CD8-positive, alpha-beta T cell (primary cell): ENCODE measurements at regions of chr12 and their contacts with region 1.

Region 1: GRCh38 chr12:11581179-11581755 is 68.2 kb upstream of the ETV6 start:
- DNase-seq: peak; percentile 16 to 81 (median 69)
- ATAC-seq: peak; percentile 26
- H3K4me3 ChIP-seq: no peak overlapping the region
- H3K4me3 Mint-ChIP-seq: no peak overlapping the region
- H3K27ac ChIP-seq: no peak overlapping the region
- H3K27ac Mint-ChIP-seq: no peak overlapping the region
- H3K4me1 ChIP-seq: peaks cover 3% of the 10 kb centered on the region
- H3K4me1 Mint-ChIP-seq: peaks cover 2% of the 10 kb centered on the region
- H3K27me3 ChIP-seq: peaks cover 0 to 5% of the 10 kb centered on the region in 2 experiments
- H3K27me3 Mint-ChIP-seq: peaks cover 2% of the 10 kb centered on the region
- CTCF ChIP-seq: peak; percentile 86

Region 2: DNA sequence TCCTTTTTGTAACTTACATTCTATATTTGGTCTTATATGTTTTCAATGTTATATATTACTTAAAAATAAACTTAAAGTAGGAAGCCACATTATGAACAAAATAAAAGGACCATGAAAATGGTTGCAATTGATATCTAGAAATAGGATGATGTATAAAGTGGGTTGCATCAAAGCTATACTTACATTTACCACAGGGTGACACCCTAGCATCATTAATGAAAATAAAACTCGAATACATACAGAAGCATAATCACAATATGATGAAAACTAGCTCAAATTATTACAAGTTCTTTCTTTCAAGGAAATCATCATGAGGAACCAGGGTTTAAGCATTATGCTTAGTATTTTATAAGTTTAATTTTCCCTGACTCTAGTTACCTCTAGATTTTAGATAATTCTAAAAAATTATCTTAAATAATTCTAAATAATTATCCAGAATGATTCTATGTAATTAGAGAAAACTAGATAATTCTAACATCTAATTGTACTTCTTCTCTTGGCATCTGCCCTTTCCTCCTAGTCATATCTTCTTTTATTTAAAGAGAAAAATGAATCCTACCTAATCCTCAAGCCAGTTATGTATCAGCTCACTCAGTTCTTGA is 810.0 kb before region 1 on chr12:
- CTCF ChIA-PET with region 1: no interaction called
- POLR2A ChIA-PET with region 1: no interaction called
- intact Hi-C with region 1: loop called in 1 of 2 experiments (anchors 5 kb)
- DNase-seq: peak in 2 of 9 experiments; percentile 59 to 72
- ATAC-seq: peak; percentile 81
- H3K4me3 ChIP-seq: no peak overlapping the region
- H3K4me3 Mint-ChIP-seq: no peak overlapping the region
- H3K27ac ChIP-seq: no peak overlapping the region
- H3K27ac Mint-ChIP-seq: no peak overlapping the region
- H3K4me1 ChIP-seq: no peaks in the 10 kb centered on the region
- H3K4me1 Mint-ChIP-seq: no peaks in the 10 kb centered on the region
- H3K27me3 ChIP-seq: peaks cover 2 to 5% of the 10 kb centered on the region in 2 experiments
- H3K27me3 Mint-ChIP-seq: peaks cover 39% of the 10 kb centered on the region
- CTCF ChIP-seq: peak; percentile 81

Region 3: GRCh38 chr12:10873378-10873777 is 707.9 kb before region 1 on chr12:
- CTCF ChIA-PET with region 1: no interaction called
- POLR2A ChIA-PET with region 1: no interaction called
- intact Hi-C with region 1: no loop called
- DNase-seq: no peak
- ATAC-seq: no peak
- H3K4me3 ChIP-seq: no peak overlapping the region
- H3K4me3 Mint-ChIP-seq: no peak overlapping the region
- H3K27ac ChIP-seq: no peak overlapping the region
- H3K27ac Mint-ChIP-seq: no peak overlapping the region
- H3K4me1 ChIP-seq: no peaks in the 10 kb centered on the region
- H3K4me1 Mint-ChIP-seq: no peaks in the 10 kb centered on the region
- H3K27me3 ChIP-seq: no peaks in the 10 kb centered on the region
- H3K27me3 Mint-ChIP-seq: no peaks in the 10 kb centered on the region
- CTCF ChIP-seq: no peak

Region 4: DNA sequence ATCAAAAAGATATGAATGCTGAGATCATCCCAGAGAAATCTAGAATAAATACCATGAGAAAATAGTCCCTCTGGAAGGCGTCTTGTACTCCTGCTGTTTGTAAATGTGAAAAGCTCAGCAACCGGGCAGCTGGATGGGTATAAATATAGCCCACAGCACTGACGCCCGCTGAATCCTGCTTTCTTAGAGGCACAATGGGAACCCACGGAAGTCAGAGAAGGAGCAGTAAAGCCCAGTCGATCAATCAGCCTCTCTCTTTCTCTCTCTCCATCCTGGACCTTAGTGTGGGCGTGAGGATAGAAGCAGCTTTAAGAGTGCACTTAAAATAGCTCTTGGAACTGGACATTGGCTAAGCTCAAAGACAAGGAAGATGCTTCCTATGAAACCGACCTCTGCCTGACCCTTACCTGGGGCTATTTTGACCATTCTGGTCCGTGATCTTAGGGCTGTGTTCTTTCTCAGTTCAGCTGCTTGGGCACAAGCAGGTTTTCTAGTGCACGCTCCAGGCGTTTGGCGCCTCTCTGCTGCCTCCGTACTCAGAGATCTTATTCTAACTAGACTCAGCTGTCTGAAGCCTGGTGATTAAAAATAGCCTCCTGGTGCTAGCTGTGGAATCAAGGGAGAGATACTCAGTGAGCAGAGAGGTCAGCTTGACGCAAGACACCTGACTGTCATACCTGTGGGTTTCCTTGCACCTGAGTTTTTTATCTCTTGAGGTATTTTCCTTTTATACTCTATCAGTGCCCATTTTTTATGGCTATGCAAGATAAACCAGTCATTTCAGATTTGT is 212.8 kb after region 1 on chr12:
- CTCF ChIA-PET with region 1: no interaction called
- POLR2A ChIA-PET with region 1: no interaction called
- intact Hi-C with region 1: no loop called
- DNase-seq: no peak
- ATAC-seq: no peak
- H3K4me3 ChIP-seq: no peak overlapping the region
- H3K4me3 Mint-ChIP-seq: no peak overlapping the region
- H3K27ac ChIP-seq: no peak overlapping the region
- H3K27ac Mint-ChIP-seq: no peak overlapping the region
- H3K4me1 ChIP-seq: peaks cover 7% of the 10 kb centered on the region
- H3K4me1 Mint-ChIP-seq: peaks cover 20% of the 10 kb centered on the region
- H3K27me3 ChIP-seq: no peaks in the 10 kb centered on the region
- H3K27me3 Mint-ChIP-seq: no peaks in the 10 kb centered on the region
- CTCF ChIP-seq: no peak

Region 5: DNA sequence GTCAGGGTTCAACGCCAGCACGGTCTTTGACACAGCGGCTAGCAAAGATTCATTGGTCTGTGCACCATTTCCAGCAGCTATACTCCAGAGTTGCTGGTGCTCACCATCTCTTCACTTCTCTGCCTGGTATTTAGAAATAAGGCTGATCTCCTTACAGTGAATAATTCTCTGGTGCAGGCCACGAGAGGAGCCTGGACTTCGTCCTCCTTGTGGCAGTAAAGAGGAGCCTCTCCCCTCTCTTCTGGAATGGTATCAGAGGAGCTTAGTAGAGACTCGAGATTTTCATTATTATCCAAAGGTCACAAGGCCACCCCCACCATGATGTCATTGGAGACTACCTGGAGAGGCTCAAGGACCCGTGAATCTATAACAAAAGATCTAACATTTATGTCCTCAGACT is 458.6 kb after region 1 on chr12:
- CTCF ChIA-PET with region 1: interaction called, 241 read pairs
- POLR2A ChIA-PET with region 1: interaction called, 3 read pairs
- intact Hi-C with region 1: no loop called
- DNase-seq: no peak
- ATAC-seq: no peak
- H3K4me3 ChIP-seq: no peak overlapping the region
- H3K4me3 Mint-ChIP-seq: no peak overlapping the region
- H3K27ac ChIP-seq: no peak overlapping the region
- H3K27ac Mint-ChIP-seq: no peak overlapping the region
- H3K4me1 ChIP-seq: no peaks in the 10 kb centered on the region
- H3K4me1 Mint-ChIP-seq: no peaks in the 10 kb centered on the region
- H3K27me3 ChIP-seq: no peaks in the 10 kb centered on the region
- H3K27me3 Mint-ChIP-seq: peaks cover 7% of the 10 kb centered on the region
- CTCF ChIP-seq: no peak

Region 6: DNA sequence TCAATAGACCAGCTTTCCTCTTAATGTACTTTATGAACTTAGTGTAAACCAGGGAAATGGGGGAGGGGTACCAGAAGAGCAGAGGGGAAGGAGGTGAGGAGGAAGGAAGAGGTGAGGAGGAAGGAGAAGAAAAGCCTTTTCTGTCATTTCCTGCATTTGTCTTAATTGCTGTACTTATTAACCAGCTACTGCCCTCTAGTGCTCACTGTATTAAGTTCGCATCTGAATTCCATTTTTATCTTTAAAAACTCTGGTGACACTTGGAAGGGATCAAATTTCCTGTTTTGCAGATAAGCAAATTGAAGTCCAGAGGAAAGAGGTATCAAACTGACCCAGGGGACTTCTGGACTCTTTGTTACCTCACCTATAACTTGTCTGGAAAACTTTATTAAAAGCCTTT is 746.5 kb after region 1 on chr12:
- CTCF ChIA-PET with region 1: interaction called, 14 read pairs
- POLR2A ChIA-PET with region 1: no interaction called
- intact Hi-C with region 1: loop called in 1 of 2 experiments (anchors 1 kb)
- DNase-seq: peak in 5 of 9 experiments; percentile 4 to 78 (median 25)
- ATAC-seq: peak; percentile 63
- H3K4me3 ChIP-seq: no peak overlapping the region
- H3K4me3 Mint-ChIP-seq: no peak overlapping the region
- H3K27ac ChIP-seq: no peak overlapping the region
- H3K27ac Mint-ChIP-seq: peak overlapping the region; percentile 63
- H3K4me1 ChIP-seq: peaks cover 10% of the 10 kb centered on the region
- H3K4me1 Mint-ChIP-seq: peaks cover 8% of the 10 kb centered on the region
- H3K27me3 ChIP-seq: no peaks in the 10 kb centered on the region
- H3K27me3 Mint-ChIP-seq: peaks cover 2% of the 10 kb centered on the region
- CTCF ChIP-seq: peak; percentile 85

Region 7: DNA sequence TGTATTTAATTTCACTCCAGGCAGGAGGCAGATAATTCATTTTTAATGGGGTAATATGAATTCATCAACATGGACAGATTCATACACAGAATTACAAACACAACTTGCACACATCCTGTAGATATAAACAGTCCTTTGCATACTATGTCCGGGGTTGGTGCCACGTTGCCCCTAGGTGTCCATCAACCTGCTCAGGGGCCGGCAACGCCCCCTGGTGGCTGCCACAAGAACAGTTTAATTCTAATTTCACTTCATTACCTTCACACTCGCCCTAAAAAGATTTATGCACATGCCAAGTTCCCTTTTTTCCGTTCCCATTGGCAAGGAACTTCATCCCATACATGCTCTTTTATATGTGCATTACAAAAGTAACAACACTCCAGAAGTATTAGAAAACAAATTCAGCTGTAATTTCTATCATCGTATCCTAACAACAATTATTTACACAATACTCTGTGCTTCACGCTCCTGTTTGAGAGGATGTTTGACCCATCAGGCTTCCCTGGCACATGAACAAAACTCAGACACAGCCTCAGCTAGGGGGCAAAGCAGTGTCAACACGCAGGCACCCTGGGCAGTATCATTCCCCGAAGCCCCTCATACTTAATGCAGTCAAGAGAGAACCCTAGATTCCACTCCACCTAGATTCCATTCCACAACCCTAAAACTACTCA is 753.2 kb after region 1 on chr12:
- CTCF ChIA-PET with region 1: interaction called, 7 read pairs
- POLR2A ChIA-PET with region 1: no interaction called
- intact Hi-C with region 1: loop called in 1 of 2 experiments (anchors 2 kb)
- DNase-seq: peak; percentile 13 to 80 (median 61)
- ATAC-seq: peak; percentile 66
- H3K4me3 ChIP-seq: no peak overlapping the region
- H3K4me3 Mint-ChIP-seq: no peak overlapping the region
- H3K27ac ChIP-seq: no peak overlapping the region
- H3K27ac Mint-ChIP-seq: no peak overlapping the region
- H3K4me1 ChIP-seq: peaks cover 7% of the 10 kb centered on the region
- H3K4me1 Mint-ChIP-seq: peaks cover 22% of the 10 kb centered on the region
- H3K27me3 ChIP-seq: no peaks in the 10 kb centered on the region
- H3K27me3 Mint-ChIP-seq: peaks cover 4% of the 10 kb centered on the region
- CTCF ChIP-seq: peak; percentile 91